Panc1 (cell line): ENCODE measurements at regions of chr2 and their contacts with region 1.

Region 1: DNA sequence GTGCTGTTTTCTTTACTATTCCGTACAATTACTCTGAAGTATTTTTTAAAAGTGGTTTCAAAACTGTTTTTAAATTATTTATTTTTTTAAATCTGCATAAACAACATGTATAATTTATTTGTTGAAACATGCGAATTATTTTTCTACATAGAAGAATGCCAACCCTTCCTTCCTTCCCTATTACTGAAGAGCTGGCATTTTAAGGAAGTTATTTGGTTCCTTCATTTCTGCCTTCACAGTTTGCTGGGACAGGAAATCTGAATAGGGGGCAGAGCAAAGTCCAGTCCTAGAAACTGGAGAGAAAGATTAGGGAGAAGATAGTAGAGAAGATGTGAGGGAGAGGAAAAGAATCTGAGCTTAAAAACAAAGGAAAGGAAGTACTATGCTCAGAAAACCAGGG is 146.7 kb upstream of the ACVR2A start:
- DNase-seq: no peak
- ATAC-seq: no peak
- H3K4me3 ChIP-seq: no peak overlapping the region
- H3K27ac ChIP-seq: no peak overlapping the region
- H3K4me1 ChIP-seq: no peaks in the 10 kb centered on the region
- H3K27me3 ChIP-seq: no peaks in the 10 kb centered on the region
- CTCF ChIP-seq: no peak

Region 2: GRCh38 chr2:147679191-147679954 is 18.8 kb before region 1 on chr2:
- CTCF ChIA-PET with region 1: no interaction called
- POLR2A ChIA-PET with region 1: no interaction called
- in situ Hi-C with region 1: no loop called
- intact Hi-C with region 1: no loop called
- DNase-seq: no peak
- ATAC-seq: no peak
- H3K4me3 ChIP-seq: no peak overlapping the region
- H3K27ac ChIP-seq: no peak overlapping the region
- H3K4me1 ChIP-seq: no peaks in the 10 kb centered on the region
- H3K27me3 ChIP-seq: no peaks in the 10 kb centered on the region
- CTCF ChIP-seq: no peak

Region 3: GRCh38 chr2:147712051-147712450 is 13.9 kb after region 1 on chr2:
- CTCF ChIA-PET with region 1: no interaction called
- POLR2A ChIA-PET with region 1: no interaction called
- in situ Hi-C with region 1: no loop called
- intact Hi-C with region 1: loop called (anchors 2 kb)
- DNase-seq: no peak
- ATAC-seq: no peak
- H3K4me3 ChIP-seq: no peak overlapping the region
- H3K27ac ChIP-seq: no peak overlapping the region
- H3K4me1 ChIP-seq: no peaks in the 10 kb centered on the region
- H3K27me3 ChIP-seq: no peaks in the 10 kb centered on the region
- CTCF ChIP-seq: no peak